HepG2 (cell line): ENCODE measurements at regions of chr12 and their contacts with region 1.

Region 1: DNA sequence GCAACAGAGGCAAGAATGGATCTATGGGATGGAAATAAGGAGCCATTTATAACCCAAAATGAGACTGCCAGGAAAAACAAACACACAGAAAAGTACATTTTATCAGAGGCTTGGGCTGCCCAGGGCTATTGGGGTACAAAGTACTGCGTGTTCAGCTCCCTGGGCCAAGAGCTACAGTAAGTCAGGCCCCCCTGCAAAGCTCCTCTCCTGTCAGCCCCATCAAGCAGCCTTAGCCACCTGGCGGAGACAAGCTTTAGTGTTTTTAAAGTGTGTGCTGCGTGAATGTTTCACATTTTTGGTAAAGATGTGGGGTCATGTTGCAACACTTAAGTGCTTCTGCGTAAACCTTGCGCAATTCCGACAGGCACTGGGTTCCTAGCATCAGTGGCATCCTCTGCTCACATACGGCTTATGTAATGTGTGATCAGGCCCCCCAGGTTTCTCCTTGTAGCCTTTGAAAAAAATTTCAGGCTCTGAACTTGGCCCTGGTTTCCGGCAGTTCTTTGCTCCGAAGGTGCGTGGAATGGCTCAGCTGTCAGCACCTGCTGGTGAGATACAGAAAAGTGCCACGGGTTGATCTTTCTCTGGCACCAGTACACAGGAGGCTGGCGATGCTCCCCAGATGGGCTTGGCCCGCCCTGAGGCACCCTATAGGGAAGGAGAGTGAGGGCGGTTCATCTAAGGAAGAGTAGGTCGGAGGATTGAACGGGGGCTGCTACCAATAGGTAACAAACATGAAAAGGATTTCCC is 198.7 kb upstream of the EEA1 start:
- DNase-seq: peak; percentile 98
- ATAC-seq: peak; percentile 95
- H3K4me3 ChIP-seq: peak overlapping the region in 2 of 3 experiments; percentile 6 to 50; a peak in 2 of 6 replicates
- H3K27ac ChIP-seq: peak overlapping the region; percentile 81
- H3K4me1 ChIP-seq: peaks cover 86% of the 10 kb centered on the region
- H3K27me3 ChIP-seq: no peaks in the 10 kb centered on the region
- CTCF ChIP-seq: peak; percentile 88
- EP300 ChIP-seq: peak; percentile 93 to 99
- POLR2A ChIP-seq: 0 out of 4 replicates have a peak, but pooled peaks of 1 of the 2 experiments have one; percentile 10
- RAD21 ChIP-seq: peak; percentile 93

Region 2: DNA sequence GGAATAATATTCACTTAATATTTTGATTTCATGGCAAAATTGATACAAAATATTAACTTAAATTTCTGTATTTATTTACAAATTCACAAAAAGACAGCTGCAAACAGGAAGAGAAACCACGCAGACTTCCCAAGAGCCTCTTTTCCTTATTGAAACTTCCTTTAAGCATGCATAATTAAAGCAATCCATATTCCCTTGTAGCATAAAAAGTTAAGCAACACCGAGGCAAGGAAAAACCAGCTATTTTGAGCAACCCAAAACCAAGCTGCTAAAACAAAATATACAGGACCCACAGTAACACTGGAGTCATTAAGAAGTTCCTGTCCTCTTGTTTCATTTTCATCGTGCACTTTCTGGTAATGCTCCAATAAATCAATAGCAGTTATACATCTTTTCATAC is 256.6 kb before region 1 on chr12:
- CTCF ChIA-PET with region 1: no interaction called
- POLR2A ChIA-PET with region 1: no interaction called
- in situ Hi-C with region 1: no loop called
- intact Hi-C with region 1: no loop called
- DNase-seq: no peak
- ATAC-seq: no peak
- H3K4me3 ChIP-seq: no peak overlapping the region
- H3K27ac ChIP-seq: no peak overlapping the region
- H3K4me1 ChIP-seq: no peaks in the 10 kb centered on the region
- H3K27me3 ChIP-seq: no peaks in the 10 kb centered on the region
- CTCF ChIP-seq: no peak
- EP300 ChIP-seq: no peak
- POLR2A ChIP-seq: no peak
- RAD21 ChIP-seq: no peak

Region 3: GRCh38 chr12:92987362-92987761 is 140.4 kb before region 1 on chr12:
- CTCF ChIA-PET with region 1: interaction called, 32 read pairs
- POLR2A ChIA-PET with region 1: interaction called, 6 read pairs
- in situ Hi-C with region 1: no loop called
- intact Hi-C with region 1: loop called (anchors 1 kb)
- DNase-seq: peak; percentile 78
- ATAC-seq: peak; percentile 77
- H3K4me3 ChIP-seq: no peak overlapping the region; a peak in 1 of 6 replicates
- H3K27ac ChIP-seq: peak overlapping the region; percentile 57
- H3K4me1 ChIP-seq: peaks cover 45% of the 10 kb centered on the region
- H3K27me3 ChIP-seq: no peaks in the 10 kb centered on the region
- CTCF ChIP-seq: peak; percentile 73
- EP300 ChIP-seq: no peak
- POLR2A ChIP-seq: no peak
- RAD21 ChIP-seq: peak; percentile 77

Region 4: DNA sequence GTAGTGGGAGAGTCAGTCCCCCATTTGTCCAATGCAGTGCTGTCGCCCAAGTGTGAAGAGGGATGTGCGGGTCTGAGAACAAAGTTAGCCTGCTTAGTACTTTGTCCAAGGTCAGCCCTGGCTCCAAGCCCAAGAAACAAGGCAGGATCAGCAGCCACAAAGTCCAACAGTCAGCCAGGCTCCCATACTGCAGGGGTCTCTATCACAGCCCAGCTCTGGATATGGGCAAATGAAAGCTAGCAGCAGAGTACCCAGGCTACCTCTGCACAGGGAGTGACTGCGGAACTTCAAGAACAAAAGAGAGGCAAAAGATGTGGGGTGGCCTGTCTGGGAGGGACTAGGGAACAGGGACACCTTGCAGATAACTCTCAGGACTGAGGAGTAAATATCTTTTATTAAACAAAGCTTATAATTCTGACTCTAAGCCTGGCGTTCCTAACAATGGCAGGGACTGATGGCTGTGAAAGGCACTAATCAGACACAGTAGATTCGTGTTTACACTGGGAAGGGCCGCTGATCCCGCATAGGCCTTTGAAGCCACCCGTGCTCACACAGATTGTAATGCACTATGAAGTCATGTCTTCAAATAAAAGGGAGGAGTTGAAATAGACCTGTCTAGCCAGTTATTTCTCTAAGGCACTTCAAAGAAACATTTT is 107.7 kb before region 1 on chr12:
- CTCF ChIA-PET with region 1: interaction called, 6 read pairs
- POLR2A ChIA-PET with region 1: interaction called, 29 read pairs
- in situ Hi-C with region 1: loop called (anchors 5 kb)
- intact Hi-C with region 1: loop called (anchors 2 kb)
- DNase-seq: peak; percentile 98
- ATAC-seq: peak; percentile 94
- H3K4me3 ChIP-seq: peak overlapping the region; percentile 19 to 59 (median 31); a peak in 4 of 6 replicates
- H3K27ac ChIP-seq: peak overlapping the region; percentile 94
- H3K4me1 ChIP-seq: peaks cover 98% of the 10 kb centered on the region
- H3K27me3 ChIP-seq: no peaks in the 10 kb centered on the region
- CTCF ChIP-seq: no peak
- EP300 ChIP-seq: peak; percentile 83 to 94; a peak in 3 of 4 replicates
- POLR2A ChIP-seq: no peak; a peak in 1 of 4 replicates
- RAD21 ChIP-seq: peak; percentile 23; the same call in 1 of the 2 replicates

Region 5: GRCh38 chr12:93089805-93090569 is 37.8 kb before region 1 on chr12:
- CTCF ChIA-PET with region 1: interaction called, 4 read pairs
- POLR2A ChIA-PET with region 1: interaction called, 17 read pairs
- in situ Hi-C with region 1: no loop called
- intact Hi-C with region 1: loop called (anchors 1 kb)
- DNase-seq: no peak
- ATAC-seq: no peak
- H3K4me3 ChIP-seq: no peak overlapping the region
- H3K27ac ChIP-seq: no peak overlapping the region
- H3K4me1 ChIP-seq: peaks cover 88% of the 10 kb centered on the region
- H3K27me3 ChIP-seq: no peaks in the 10 kb centered on the region
- CTCF ChIP-seq: no peak
- EP300 ChIP-seq: no peak
- POLR2A ChIP-seq: no peak
- RAD21 ChIP-seq: no peak

Region 6: GRCh38 chr12:93146263-93146939 is 18.6 kb after region 1 on chr12:
- CTCF ChIA-PET with region 1: no interaction called
- POLR2A ChIA-PET with region 1: no interaction called
- in situ Hi-C with region 1: no loop called
- intact Hi-C with region 1: no loop called
- DNase-seq: no peak
- ATAC-seq: no peak
- H3K4me3 ChIP-seq: no peak overlapping the region
- H3K27ac ChIP-seq: no peak overlapping the region
- H3K4me1 ChIP-seq: peaks cover 25% of the 10 kb centered on the region
- H3K27me3 ChIP-seq: no peaks in the 10 kb centered on the region
- CTCF ChIP-seq: no peak
- EP300 ChIP-seq: no peak
- POLR2A ChIP-seq: no peak
- RAD21 ChIP-seq: no peak

Region 7: GRCh38 chr12:93176165-93176564 is 48.4 kb after region 1 on chr12:
- CTCF ChIA-PET with region 1: no interaction called
- POLR2A ChIA-PET with region 1: no interaction called
- in situ Hi-C with region 1: no loop called
- intact Hi-C with region 1: loop called (anchors 5 kb)
- DNase-seq: no peak
- ATAC-seq: no peak
- H3K4me3 ChIP-seq: no peak overlapping the region; a peak in 1 of 6 replicates
- H3K27ac ChIP-seq: peak overlapping the region; percentile 49
- H3K4me1 ChIP-seq: peaks cover 63% of the 10 kb centered on the region
- H3K27me3 ChIP-seq: no peaks in the 10 kb centered on the region; a peak in 2 of 5 replicates
- CTCF ChIP-seq: no peak
- EP300 ChIP-seq: no peak
- POLR2A ChIP-seq: no peak
- RAD21 ChIP-seq: no peak

Region 8: DNA sequence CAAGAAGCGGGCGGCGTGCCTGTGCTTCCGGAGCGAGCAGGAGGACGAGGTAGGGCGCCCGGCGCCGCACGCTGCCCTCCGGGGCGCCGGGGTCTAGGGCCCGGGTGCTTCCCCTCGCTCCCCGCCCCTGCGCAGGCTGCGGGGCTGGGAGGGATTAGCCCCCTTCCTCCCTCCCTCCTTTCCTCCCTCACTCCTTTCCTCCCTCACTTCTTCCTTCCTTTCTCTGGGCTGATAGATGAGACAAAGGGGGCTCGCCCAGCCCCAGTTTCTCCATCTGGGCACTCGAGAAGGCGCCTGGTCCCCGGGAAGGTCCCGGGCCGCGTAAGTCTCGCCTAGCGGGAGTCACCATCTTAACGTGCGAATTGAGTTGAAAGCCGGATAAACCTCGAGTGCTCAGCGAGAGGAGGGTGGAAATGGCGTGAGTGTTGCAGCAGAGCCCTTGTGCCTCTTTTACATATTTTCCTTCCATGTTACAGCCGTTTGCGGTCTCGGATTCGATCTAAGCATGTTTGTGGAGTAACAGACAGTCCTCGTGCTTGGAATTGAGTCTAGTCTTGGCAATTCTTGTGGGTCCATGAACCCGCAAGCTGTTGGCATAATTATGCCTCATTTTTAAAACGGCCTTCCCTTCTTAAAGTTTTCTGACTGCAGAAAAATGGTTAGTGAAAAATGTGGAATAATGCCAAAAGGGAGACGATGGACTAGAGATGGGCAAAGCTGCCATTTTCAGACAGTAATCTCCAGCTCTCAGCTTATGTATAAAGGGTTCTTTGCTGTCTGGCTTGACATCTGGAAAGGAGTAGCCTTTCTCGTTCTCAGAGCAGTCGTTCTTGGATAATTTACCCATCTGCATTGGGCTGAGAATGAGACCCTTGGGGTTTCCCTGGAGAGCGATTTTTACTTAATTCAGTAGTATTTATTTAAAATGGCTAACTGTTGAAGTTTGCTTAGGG is 250.9 kb after region 1 on chr12:
- CTCF ChIA-PET with region 1: no interaction called
- POLR2A ChIA-PET with region 1: no interaction called
- in situ Hi-C with region 1: loop called (anchors 25 kb)
- intact Hi-C with region 1: loop called (anchors 5 kb)
- DNase-seq: no peak
- ATAC-seq: peak; percentile 8; the same call in 2 of the 3 replicates
- H3K4me3 ChIP-seq: peak overlapping the region; percentile 78 to 88 (median 80)
- H3K27ac ChIP-seq: peak overlapping the region; percentile 64
- H3K4me1 ChIP-seq: peaks cover 56% of the 10 kb centered on the region
- H3K27me3 ChIP-seq: no peaks in the 10 kb centered on the region; a peak in 1 of 5 replicates
- CTCF ChIP-seq: no peak
- EP300 ChIP-seq: no peak
- POLR2A ChIP-seq: 0 out of 4 replicates have a peak, but pooled peaks of 1 of the 2 experiments have one; percentile 29
- RAD21 ChIP-seq: no peak